Ovary (tissue), 10 donors: ENCODE measurements at regions of chr19 and their contacts with region 1.

Region 1: DNA sequence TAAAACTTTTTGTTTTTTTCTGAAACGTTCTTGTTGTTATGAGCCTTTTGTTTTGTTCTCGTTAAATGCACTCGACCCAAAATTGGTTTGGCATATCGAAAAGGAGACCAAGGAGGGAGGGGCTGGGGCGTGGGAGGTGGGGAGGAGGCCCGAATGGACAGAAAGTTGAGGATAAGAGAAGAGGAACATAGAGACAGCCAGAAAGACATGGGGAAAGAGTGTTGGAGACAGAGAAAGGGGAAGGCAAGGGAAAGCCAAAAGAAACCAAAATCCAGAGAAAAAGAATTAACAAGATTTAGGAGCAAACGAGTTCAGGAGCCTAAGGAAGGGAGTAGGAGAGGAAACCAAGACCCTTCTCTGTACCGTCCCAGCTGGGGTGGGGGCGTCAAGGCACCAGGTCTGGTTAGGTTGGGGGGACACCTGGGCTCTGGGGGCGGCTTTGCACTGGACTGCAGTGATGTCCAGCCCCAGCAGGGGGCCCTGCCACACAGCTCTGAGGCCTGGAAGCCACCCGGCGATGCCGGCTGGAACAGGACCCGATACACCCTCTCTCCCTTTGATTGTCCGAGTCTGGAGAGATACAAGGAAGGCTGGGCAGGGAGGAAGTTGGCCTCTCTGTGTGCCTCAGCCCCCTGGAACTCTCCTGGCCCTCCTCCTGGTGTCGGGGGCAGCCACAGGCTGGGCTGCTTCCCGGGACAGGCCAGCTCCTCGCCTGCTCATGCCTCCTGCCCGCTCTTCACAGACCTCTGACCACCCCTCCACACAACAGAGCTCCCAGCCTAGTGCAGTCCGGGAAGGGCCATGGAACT is 11.6 kb upstream of the ASF1B start:
- DNase-seq: peak; percentile 69 to 83 (median 76)
- H3K4me3 ChIP-seq: no peak overlapping the region
- H3K27ac ChIP-seq: no peak overlapping the region
- H3K4me1 ChIP-seq: no peaks in the 10 kb centered on the region
- H3K27me3 ChIP-seq: no peaks in the 10 kb centered on the region
- CTCF ChIP-seq: peak; percentile 58 to 86 (median 77)
- EP300 ChIP-seq: no peak
- POLR2A ChIP-seq: no peak

Region 2: GRCh38 chr19:14059093-14059480 is 88.9 kb before region 1 on chr19:
- intact Hi-C with region 1: no loop called
- DNase-seq: no peak
- H3K4me3 ChIP-seq: no peak overlapping the region
- H3K27ac ChIP-seq: no peak overlapping the region
- H3K4me1 ChIP-seq: peaks cover 4% of the 10 kb centered on the region
- H3K27me3 ChIP-seq: no peaks in the 10 kb centered on the region
- CTCF ChIP-seq: no peak
- EP300 ChIP-seq: no peak
- POLR2A ChIP-seq: no peak

Region 3: GRCh38 chr19:14237014-14237941 is 89.3 kb after region 1 on chr19:
- intact Hi-C with region 1: no loop called
- DNase-seq: no peak
- H3K4me3 ChIP-seq: no peak overlapping the region
- H3K27ac ChIP-seq: no peak overlapping the region
- H3K4me1 ChIP-seq: no peaks in the 10 kb centered on the region
- H3K27me3 ChIP-seq: no peaks in the 10 kb centered on the region
- CTCF ChIP-seq: no peak
- EP300 ChIP-seq: no peak
- POLR2A ChIP-seq: no peak

Region 4: DNA sequence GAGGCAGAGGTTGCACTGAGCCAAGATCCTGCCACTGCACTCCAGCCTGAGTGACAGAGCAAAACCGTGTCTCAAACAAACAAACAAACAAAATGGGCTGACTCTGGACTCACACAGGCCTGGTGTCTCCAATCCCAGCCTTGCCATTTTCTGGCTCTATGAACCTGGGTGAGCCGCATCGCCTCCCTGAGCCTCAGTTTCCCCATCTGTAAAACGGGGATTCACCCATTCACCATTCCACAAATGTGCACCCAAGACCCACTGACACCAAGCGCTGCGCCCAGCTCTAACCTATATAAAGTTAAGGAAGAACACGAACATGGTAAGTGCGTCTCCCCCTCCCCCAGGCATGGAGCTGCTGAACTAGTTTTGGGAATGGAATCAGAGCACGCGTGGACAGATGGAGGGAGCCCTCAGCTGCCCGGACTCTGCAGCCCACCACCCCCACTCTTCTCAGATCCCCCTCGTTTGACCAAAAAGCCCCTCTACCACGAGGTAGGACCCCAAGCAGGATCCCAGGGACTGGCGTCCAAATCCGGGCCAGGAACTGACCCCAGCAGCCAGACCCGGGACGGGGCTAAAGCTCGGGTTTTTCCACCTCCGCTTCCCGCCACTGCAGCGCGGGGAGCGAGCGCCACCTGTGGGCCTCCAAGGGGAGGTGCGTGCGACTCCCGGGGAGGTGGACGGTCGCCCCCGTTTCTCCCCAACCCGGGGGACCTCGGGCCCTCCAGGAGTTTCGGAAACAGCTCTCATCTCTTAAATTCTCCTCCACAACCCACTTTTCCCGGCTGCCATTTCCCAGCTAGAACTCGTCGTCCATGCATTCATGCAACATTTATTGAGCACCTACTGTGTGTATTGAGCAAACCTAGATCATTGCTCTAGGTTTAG is 200.2 kb after region 1 on chr19:
- intact Hi-C with region 1: loop called (anchors 5 to 10 kb)
- DNase-seq: peak; percentile 31 to 75 (median 56)
- H3K4me3 ChIP-seq: no peak overlapping the region
- H3K27ac ChIP-seq: no peak overlapping the region
- H3K4me1 ChIP-seq: no peaks in the 10 kb centered on the region
- H3K27me3 ChIP-seq: no peaks in the 10 kb centered on the region
- CTCF ChIP-seq: peak in 2 of 3 donors; percentile 64 to 89
- EP300 ChIP-seq: no peak
- POLR2A ChIP-seq: no peak

Region 5: DNA sequence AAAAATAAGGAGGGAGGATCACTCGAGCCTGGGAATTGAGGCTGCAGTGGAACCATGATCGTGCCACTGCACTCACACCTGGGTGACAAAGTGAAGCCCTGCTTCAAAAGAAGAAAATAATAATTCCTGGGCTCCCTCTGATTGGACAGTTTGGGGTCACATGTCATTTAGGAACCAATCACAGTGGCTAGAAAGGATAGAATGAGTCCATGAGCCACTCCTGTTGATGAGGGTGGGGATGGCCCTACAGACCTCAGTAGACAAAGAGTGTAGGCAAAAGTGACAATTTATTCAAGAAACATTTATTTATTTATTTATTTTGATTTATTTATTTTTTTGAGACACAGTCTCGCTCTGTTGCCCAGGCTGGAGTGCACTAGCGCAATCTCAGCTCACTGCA is 206.4 kb after region 1 on chr19:
- intact Hi-C with region 1: loop called (anchors 5 to 10 kb)
- DNase-seq: no peak
- H3K4me3 ChIP-seq: no peak overlapping the region
- H3K27ac ChIP-seq: no peak overlapping the region
- H3K4me1 ChIP-seq: no peaks in the 10 kb centered on the region
- H3K27me3 ChIP-seq: no peaks in the 10 kb centered on the region
- CTCF ChIP-seq: no peak
- EP300 ChIP-seq: no peak
- POLR2A ChIP-seq: no peak

Region 6: DNA sequence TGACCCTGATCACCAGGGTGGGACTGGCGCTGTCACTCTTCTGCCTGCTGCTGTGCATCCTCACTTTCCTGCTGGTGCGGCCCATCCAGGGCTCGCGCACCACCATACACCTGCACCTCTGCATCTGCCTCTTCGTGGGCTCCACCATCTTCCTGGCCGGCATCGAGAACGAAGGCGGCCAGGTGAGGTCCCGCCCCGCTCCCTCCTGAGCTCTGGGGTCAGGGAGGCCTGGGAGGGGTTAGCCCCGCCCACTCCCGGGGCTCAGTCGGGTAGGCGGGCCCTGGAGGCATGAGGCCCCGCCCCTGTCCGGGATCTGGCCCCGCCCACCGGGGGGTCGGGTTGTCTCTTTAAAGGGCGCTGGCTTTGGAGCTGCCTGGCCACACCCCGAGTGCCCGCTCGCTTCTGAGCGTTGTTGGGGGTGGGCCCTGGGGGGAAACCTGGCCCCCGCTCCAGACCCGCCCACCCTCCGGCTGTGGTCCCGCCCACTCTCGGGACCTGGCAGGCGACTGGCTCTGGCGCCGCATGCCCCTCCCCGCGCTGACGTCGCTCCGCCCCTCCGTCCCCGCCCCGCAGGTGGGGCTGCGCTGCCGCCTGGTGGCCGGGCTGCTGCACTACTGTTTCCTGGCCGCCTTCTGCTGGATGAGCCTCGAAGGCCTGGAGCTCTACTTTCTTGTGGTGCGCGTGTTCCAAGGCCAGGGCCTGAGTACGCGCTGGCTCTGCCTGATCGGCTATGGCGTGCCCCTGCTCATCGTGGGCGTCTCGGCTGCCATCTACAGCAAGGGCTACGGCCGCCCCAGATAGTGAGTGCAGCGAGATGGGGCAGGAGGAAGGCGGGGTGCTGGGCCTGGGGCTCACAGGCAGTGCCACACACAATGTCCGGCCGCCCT is 258.0 kb after region 1 on chr19:
- intact Hi-C with region 1: loop called in 1 of 4 experiments (anchors 5 kb)
- DNase-seq: peak; percentile 88 to 96 (median 92)
- H3K4me3 ChIP-seq: no peak overlapping the region
- H3K27ac ChIP-seq: peak overlapping the region; percentile 22 to 61
- H3K4me1 ChIP-seq: peaks cover 6% of the 10 kb centered on the region
- H3K27me3 ChIP-seq: no peaks in the 10 kb centered on the region
- CTCF ChIP-seq: peak; percentile 76 to 94 (median 88)
- EP300 ChIP-seq: no peak
- POLR2A ChIP-seq: no peak

Region 7: GRCh38 chr19:14472202-14472938 is 324.4 kb after region 1 on chr19:
- intact Hi-C with region 1: loop called in 1 of 4 experiments (anchors 10 kb)
- DNase-seq: peak; percentile 64 to 85 (median 80)
- H3K4me3 ChIP-seq: no peak overlapping the region
- H3K27ac ChIP-seq: no peak overlapping the region
- H3K4me1 ChIP-seq: peaks cover 4% of the 10 kb centered on the region
- H3K27me3 ChIP-seq: no peaks in the 10 kb centered on the region
- CTCF ChIP-seq: peak; percentile 89 to 91 (median 90)
- EP300 ChIP-seq: no peak
- POLR2A ChIP-seq: peak; percentile 15

Region 8: DNA sequence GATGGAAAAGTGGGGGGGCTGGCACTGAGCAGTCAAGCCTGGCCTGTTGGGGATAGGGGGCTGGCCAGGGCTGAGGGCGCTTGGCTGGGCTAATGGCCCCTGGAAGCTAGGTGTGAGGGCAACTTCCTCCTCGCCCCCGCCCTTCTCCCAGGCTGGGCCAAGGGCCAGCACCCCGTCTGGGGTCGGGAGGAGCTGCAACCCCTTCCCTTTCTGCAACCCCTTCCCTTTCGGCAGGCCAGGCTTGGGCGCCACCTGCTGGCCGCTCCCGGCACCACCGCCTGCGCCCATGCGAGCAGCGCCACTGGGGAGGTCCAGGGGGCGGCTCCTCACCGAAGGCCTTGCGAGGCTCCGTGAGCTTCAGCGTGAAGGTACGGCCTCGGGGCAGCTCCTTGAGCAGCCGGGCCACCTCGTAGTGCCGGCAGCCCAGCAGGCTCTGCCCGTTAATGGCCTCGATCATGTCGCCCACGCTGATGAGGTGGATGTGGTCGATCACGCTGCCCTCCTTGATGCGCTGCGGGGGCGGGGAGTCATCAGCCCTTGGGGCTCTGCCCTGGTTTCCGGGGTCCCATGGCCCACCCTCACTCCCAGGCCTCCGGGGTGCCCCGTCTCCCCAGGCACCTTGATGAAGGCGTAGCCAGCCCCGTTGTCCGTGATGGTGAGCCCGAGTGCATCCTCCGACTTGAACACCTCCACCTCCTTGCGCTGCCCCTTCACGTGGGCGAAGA is 332.1 kb after region 1 on chr19:
- intact Hi-C with region 1: loop called in 2 of 4 experiments (anchors 10 kb)
- DNase-seq: no peak
- H3K4me3 ChIP-seq: no peak overlapping the region
- H3K27ac ChIP-seq: no peak overlapping the region
- H3K4me1 ChIP-seq: no peaks in the 10 kb centered on the region
- H3K27me3 ChIP-seq: no peaks in the 10 kb centered on the region
- CTCF ChIP-seq: peak in 2 of 3 donors; percentile 38
- EP300 ChIP-seq: no peak
- POLR2A ChIP-seq: no peak